Activated CD4-positive, alpha-beta memory T cell treated with anti-CD3 and anti-CD28 coated beads for 36 hours (primary cell): ENCODE measurements at regions of chr6 and their contacts with region 1.

Region 1: GRCh38 chr6:36027501-36028087 is at the start of gene MAPK14:
- DNase-seq: peak; percentile 99
- H3K4me3 Mint-ChIP-seq: peak within 1 kb of the TSS; percentile 98
- H3K27ac Mint-ChIP-seq: peak within 1 kb of the TSS; percentile 97
- H3K4me1 Mint-ChIP-seq: peaks cover 28% of the 10 kb centered on the region
- H3K27me3 Mint-ChIP-seq: peaks cover 12% of the 10 kb centered on the region
- total RNA-seq, gene MAPK14: 39.3 to 44.0 TPM

Region 2: DNA sequence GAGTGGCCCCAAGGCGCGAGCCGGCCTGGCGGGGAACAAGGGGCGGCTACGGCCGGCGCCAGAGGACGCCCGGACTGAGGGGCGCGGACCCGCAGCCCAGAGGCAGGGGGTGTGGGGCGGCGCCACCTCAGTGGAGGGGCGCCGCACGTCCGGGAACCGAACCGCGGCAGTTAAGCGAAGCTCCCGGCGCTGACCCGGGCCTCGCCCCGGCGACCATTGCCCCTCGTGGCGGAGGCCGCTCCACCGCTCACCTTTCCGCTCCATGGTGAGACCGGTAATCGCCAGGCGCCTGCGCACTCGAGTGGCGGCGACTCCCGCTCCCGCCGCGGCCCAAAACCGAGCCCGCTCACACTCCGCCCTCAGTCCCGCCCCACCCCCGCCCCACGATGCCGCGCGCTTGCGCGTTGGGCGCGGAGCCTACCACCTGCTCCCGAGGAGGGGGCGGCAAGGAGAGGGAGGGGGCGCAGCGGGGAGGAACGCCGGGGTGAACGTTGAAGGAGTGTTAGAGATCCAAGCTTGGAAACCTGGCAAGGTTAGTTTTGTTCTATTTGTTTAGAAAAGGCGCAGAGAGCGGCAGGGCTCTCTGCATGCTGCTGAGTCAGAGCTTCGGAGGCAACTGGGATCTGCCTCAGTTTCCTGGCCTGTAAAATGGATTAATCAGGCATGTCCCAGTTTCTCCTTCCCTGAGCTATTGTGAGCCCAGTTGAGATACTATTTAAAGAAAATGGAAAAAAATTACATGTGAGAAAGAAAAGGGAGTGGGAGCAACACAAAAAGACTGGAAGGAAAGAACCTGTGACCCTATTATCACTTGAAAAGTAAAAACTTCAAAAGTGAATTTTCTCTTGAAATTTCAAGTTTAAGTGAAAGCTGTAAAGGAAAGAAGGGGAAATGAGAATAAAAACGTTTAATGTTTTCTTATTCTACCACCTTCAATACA is 106.5 kb before region 1 on chr6 and contains the start of gene SRPK1:
- CTCF ChIA-PET with region 1: no interaction called
- POLR2A ChIA-PET with region 1: interaction called, 10 read pairs
- intact Hi-C with region 1: loop called (anchors 2 kb)
- DNase-seq: peak; percentile 94
- H3K4me3 Mint-ChIP-seq: peak within 1 kb of the TSS; percentile 86
- H3K27ac Mint-ChIP-seq: peak within 1 kb of the TSS; percentile 96
- H3K4me1 Mint-ChIP-seq: peaks cover 41% of the 10 kb centered on the region
- H3K27me3 Mint-ChIP-seq: no peaks in the 10 kb centered on the region
- total RNA-seq, gene SRPK1: 134 to 143 TPM

Region 3: GRCh38 chr6:36083446-36083845 is 55.9 kb after region 1 on chr6:
- CTCF ChIA-PET with region 1: interaction called, 11 read pairs
- POLR2A ChIA-PET with region 1: no interaction called
- intact Hi-C with region 1: loop called (anchors 5 kb)
- DNase-seq: no peak
- H3K4me3 Mint-ChIP-seq: no peak overlapping the region
- H3K27ac Mint-ChIP-seq: no peak overlapping the region
- H3K4me1 Mint-ChIP-seq: peaks cover 11% of the 10 kb centered on the region
- H3K27me3 Mint-ChIP-seq: no peaks in the 10 kb centered on the region

Region 4: GRCh38 chr6:36131511-36132245 is 104.1 kb after region 1 on chr6:
- CTCF ChIA-PET with region 1: interaction called, 12 read pairs
- POLR2A ChIA-PET with region 1: interaction called, 29 read pairs
- intact Hi-C with region 1: loop called (anchors 1 kb)
- DNase-seq: peak; percentile 84
- H3K4me3 Mint-ChIP-seq: peak overlapping the region; percentile 83
- H3K27ac Mint-ChIP-seq: peak overlapping the region; percentile 94
- H3K4me1 Mint-ChIP-seq: peaks cover 43% of the 10 kb centered on the region
- H3K27me3 Mint-ChIP-seq: no peaks in the 10 kb centered on the region

Region 5: DNA sequence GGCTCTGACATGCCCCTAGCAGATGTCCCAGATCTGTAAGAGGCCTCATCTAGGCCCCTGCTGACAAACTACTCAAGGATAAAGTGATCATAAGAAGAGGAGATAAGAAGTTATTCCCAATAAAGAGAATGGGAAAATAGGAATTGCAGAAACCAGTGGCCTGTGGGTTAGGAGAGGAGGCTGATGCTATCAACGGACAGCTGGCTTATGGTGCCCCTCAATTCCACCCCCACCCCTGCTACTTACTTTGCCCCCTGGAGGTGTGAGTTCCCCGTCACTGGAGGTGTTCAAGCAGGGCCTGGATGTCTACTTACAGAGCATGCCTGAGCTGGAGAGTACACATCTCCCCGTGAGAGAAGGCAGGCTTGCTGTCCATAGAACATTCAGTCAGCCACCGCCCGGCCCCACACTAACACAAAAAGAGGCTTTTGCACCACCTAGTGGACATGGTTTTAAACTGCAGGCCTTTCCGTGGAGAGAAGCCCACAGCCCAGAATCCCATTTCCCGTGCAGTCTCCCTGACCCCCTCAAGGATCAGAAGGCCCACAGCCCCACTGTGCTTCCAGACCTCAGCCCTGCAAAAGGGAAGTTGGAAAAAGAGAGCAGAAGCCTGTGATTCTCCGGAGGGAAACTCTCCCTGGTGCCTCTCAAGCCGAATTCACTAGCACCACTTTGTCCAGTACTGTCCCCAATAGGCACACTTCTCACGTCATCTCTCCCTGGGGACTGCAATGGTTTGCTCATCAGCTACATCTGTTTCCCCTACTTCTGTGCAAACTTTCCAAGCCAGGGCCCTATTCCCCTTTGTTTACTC is 332.9 kb after region 1 on chr6:
- CTCF ChIA-PET with region 1: interaction called, 17 read pairs
- POLR2A ChIA-PET with region 1: no interaction called
- intact Hi-C with region 1: loop called (anchors 1 kb)
- DNase-seq: peak; percentile 79
- H3K4me3 Mint-ChIP-seq: no peak overlapping the region
- H3K27ac Mint-ChIP-seq: no peak overlapping the region
- H3K4me1 Mint-ChIP-seq: peaks cover 24% of the 10 kb centered on the region
- H3K27me3 Mint-ChIP-seq: peaks cover 3% of the 10 kb centered on the region